ENCODE measurements at regions of chr5 and their contacts with region 1.

Region 1: DNA sequence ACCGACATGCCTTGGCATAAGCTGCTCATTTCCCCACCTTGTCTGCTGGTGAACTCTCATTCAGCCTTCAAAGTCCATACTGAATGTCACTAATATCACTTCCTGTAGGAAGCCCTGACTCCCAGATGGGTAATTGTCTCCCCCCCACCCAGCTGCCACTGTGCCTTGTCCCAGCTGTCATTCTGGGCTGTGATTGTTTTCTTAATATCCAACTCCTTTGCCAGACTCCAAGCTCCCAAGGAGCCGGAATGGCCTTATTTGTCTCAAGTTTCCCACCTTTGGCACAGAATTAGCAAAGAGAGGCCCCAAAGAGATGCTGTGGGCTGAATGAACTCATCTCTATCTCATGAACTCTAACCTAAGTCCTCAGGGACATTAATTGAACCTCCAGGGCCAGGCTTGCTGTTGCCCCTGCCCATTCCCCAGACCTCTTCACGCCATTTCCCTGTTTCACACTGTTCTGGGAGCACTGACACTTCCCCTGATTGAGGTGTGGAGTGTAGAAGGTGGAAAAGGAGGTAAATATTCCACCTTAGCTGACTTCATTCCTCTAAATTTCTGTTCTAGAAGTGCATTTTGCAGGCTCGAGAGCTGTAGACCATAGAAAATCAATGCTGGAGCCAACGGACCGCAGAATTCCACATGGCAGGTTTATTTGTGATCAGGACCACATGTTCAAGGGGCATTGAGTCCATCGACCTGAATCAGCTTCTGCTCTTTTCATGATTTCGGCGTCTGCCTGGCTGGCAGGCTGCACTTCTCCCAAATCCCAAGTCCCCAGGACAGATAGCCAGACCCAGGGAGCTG is 4.9 kb upstream of the SH3PXD2B start:
- DNase-seq: no peak
- H3K4me3 ChIP-seq: no peak overlapping the region
- H3K27ac ChIP-seq: no peak overlapping the region
- H3K4me1 ChIP-seq: peaks cover 5 to 11% of the 10 kb centered on the region in 2 experiments; a peak in 1 of 4 replicates
- H3K27me3 ChIP-seq: no peaks in the 10 kb centered on the region
- CTCF ChIP-seq: no peak
- EP300 ChIP-seq: no peak
- RAD21 ChIP-seq: no peak

Region 2: DNA sequence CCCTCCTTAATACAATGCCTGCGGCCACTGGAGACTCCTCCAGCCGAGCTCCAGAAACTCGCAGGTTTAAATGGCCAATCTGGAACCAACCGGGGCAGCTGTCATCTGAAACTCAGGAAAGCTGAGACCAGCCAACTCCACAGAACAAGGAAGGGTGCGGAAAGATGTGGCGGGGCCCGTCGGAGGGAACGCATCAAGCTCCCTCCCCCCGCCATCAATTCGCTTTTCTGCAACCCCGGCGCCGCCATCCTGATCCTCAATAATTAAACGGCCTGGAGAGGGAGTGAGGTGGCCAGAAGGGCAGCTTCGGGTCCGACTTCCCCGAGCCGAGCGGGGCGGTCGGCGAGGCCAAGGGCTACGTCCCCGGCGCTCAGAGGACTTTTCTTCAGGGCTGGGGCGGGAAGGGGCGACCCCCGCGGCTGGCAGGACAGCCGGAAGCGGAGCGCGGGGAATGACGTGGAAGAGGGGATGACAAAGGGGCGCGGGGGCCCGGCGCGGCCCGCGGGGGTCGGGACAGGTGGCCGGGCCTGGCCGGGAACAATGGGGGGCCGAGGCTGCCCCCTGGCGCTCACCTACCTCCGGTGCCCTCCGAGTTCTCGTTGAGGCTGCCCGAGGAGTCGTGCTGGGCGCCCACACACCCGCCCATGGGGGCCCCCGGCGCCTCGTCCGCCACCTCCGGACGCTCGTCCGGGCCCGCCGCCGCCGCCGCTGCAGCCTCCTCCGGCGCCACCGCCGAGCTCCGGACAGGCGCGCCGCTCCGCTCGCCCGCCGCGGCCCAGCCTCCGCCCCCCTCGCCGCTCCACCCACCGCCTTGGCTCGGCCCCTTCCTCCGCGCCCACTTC is 175.9 kb before region 1 on chr5 and contains the start of gene UBTD2:
- CTCF ChIA-PET with region 1: no interaction called
- POLR2A ChIA-PET with region 1: no interaction called
- DNase-seq: peak; percentile 94
- H3K4me3 ChIP-seq: peak within 1 kb of the TSS; percentile 77 to 94
- H3K27ac ChIP-seq: peak within 1 kb of the TSS; percentile 67 to 86
- H3K4me1 ChIP-seq: peaks cover 5 to 8% of the 10 kb centered on the region in 2 experiments; a peak in 3 of 4 replicates
- H3K27me3 ChIP-seq: no peaks in the 10 kb centered on the region
- CTCF ChIP-seq: peak; percentile 56
- EP300 ChIP-seq: no peak
- RAD21 ChIP-seq: peak; percentile 45
- polyA plus RNA-seq, gene UBTD2: 13.8 and 15.5 TPM in 2 replicates

Region 3: DNA sequence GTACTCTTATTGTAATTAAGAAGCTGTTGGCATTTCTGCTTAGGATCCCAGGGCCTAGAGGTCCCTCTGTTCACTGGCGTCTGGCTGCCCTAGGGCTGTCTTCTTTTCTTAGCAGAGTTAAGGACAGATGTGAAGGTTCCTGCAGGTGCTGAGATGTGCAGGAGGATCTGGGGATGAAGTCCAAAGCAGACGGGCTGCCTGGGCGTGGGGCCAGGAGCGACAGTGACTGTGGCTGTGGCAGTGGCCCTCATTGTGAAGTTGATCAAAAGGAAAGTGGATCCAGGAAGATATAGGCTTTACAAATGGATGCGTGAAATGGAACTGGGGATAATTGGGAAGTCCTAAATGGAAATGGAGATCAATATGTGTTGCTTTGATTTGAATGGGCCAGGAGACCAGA is 14.2 kb after region 1 on chr5:
- CTCF ChIA-PET with region 1: interaction called, 23 read pairs
- POLR2A ChIA-PET with region 1: no interaction called
- DNase-seq: no peak
- H3K4me3 ChIP-seq: no peak overlapping the region
- H3K27ac ChIP-seq: no peak overlapping the region
- H3K4me1 ChIP-seq: peaks cover 0 to 3% of the 10 kb centered on the region in 2 experiments; a peak in 1 of 4 replicates
- H3K27me3 ChIP-seq: no peaks in the 10 kb centered on the region
- CTCF ChIP-seq: no peak
- EP300 ChIP-seq: no peak
- RAD21 ChIP-seq: no peak

Region 4: GRCh38 chr5:172509405-172509781 is 50.2 kb after region 1 on chr5:
- CTCF ChIA-PET with region 1: no interaction called
- POLR2A ChIA-PET with region 1: no interaction called
- DNase-seq: no peak
- H3K4me3 ChIP-seq: no peak overlapping the region
- H3K27ac ChIP-seq: no peak overlapping the region
- H3K4me1 ChIP-seq: no peaks in the 10 kb centered on the region
- H3K27me3 ChIP-seq: no peaks in the 10 kb centered on the region; the same call in 1 of the 2 replicates
- CTCF ChIP-seq: no peak
- EP300 ChIP-seq: no peak
- RAD21 ChIP-seq: no peak